ENCODE measurements at regions of chr1 and their contacts with region 1.

Region 1: GRCh38 chr1:244163861-244164562 is 112.9 kb downstream of the ZBTB18 start:
- DNase-seq: peak; percentile 99
- ATAC-seq: peak; percentile 92
- H3K4me3 ChIP-seq: peak overlapping the region; percentile 45
- H3K27ac ChIP-seq: peak overlapping the region; percentile 78
- H3K4me1 ChIP-seq: peaks cover 38% of the 10 kb centered on the region
- H3K27me3 ChIP-seq: no peaks in the 10 kb centered on the region
- CTCF ChIP-seq: no peak

Region 2: DNA sequence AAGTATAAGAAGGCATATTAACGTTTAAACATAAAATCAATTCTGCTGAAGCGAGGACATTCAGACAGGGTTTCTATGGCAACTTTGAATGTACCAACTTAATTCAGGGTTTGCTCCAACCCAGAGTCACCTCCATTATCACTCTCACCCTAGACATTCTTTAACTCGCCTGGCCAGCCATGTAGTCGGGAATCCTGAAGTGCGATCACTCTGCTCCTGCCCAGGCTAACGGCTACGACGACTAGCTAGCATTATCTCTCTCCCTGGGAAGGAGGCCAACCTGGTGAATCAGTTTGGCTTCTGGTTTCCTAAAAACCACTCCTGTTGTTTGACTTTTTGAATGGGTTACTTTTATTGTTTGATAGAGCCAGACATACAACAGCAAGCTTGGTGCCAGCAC is 151.8 kb before region 1 on chr1:
- CTCF ChIA-PET with region 1: no interaction called
- POLR2A ChIA-PET with region 1: no interaction called
- intact Hi-C with region 1: loop called (anchors 2 kb)
- DNase-seq: peak; percentile 97
- ATAC-seq: peak; percentile 89
- H3K4me3 ChIP-seq: peak overlapping the region; percentile 50
- H3K27ac ChIP-seq: no peak overlapping the region
- H3K4me1 ChIP-seq: peaks cover 7% of the 10 kb centered on the region
- H3K27me3 ChIP-seq: no peaks in the 10 kb centered on the region
- CTCF ChIP-seq: no peak

Region 3: GRCh38 chr1:244074559-244075171 is 89.3 kb before region 1 on chr1:
- CTCF ChIA-PET with region 1: no interaction called
- POLR2A ChIA-PET with region 1: no interaction called
- intact Hi-C with region 1: loop called (anchors 5 kb)
- DNase-seq: no peak
- ATAC-seq: peak; percentile 37
- H3K4me3 ChIP-seq: no peak overlapping the region
- H3K27ac ChIP-seq: no peak overlapping the region
- H3K4me1 ChIP-seq: peaks cover 9% of the 10 kb centered on the region; the same call in 1 of the 2 replicates
- H3K27me3 ChIP-seq: no peaks in the 10 kb centered on the region
- CTCF ChIP-seq: no peak

Region 4: GRCh38 chr1:244092293-244092963 is 71.6 kb before region 1 on chr1:
- CTCF ChIA-PET with region 1: no interaction called
- POLR2A ChIA-PET with region 1: no interaction called
- intact Hi-C with region 1: no loop called
- DNase-seq: peak; percentile 63
- ATAC-seq: peak; percentile 76
- H3K4me3 ChIP-seq: no peak overlapping the region
- H3K27ac ChIP-seq: no peak overlapping the region
- H3K4me1 ChIP-seq: peaks cover 10% of the 10 kb centered on the region; the same call in 1 of the 2 replicates
- H3K27me3 ChIP-seq: no peaks in the 10 kb centered on the region
- CTCF ChIP-seq: no peak

Region 5: GRCh38 chr1:244214009-244214967 is 50.3 kb after region 1 on chr1:
- CTCF ChIA-PET with region 1: no interaction called
- POLR2A ChIA-PET with region 1: no interaction called
- intact Hi-C with region 1: loop called (anchors 1 kb)
- DNase-seq: peak; percentile 90
- ATAC-seq: peak; percentile 50
- H3K4me3 ChIP-seq: no peak overlapping the region
- H3K27ac ChIP-seq: peak overlapping the region; percentile 45
- H3K4me1 ChIP-seq: peaks cover 25% of the 10 kb centered on the region
- H3K27me3 ChIP-seq: no peaks in the 10 kb centered on the region
- CTCF ChIP-seq: no peak

Region 6: GRCh38 chr1:244231572-244232315 is 67.7 kb after region 1 on chr1:
- CTCF ChIA-PET with region 1: no interaction called
- POLR2A ChIA-PET with region 1: no interaction called
- intact Hi-C with region 1: loop called (anchors 5 kb)
- DNase-seq: peak; percentile 79
- ATAC-seq: peak; percentile 76
- H3K4me3 ChIP-seq: peak overlapping the region; percentile 68
- H3K27ac ChIP-seq: peak overlapping the region; percentile 68
- H3K4me1 ChIP-seq: peaks cover 26% of the 10 kb centered on the region
- H3K27me3 ChIP-seq: no peaks in the 10 kb centered on the region
- CTCF ChIP-seq: no peak

Region 7: GRCh38 chr1:244265507-244265906 is 101.5 kb after region 1 on chr1:
- CTCF ChIA-PET with region 1: no interaction called
- POLR2A ChIA-PET with region 1: no interaction called
- intact Hi-C with region 1: no loop called
- DNase-seq: no peak
- ATAC-seq: no peak
- H3K4me3 ChIP-seq: no peak overlapping the region
- H3K27ac ChIP-seq: no peak overlapping the region
- H3K4me1 ChIP-seq: peaks cover 8% of the 10 kb centered on the region; the same call in 1 of the 2 replicates
- H3K27me3 ChIP-seq: no peaks in the 10 kb centered on the region
- CTCF ChIP-seq: no peak

Region 8: GRCh38 chr1:244445320-244446181 is 281.5 kb after region 1 on chr1:
- CTCF ChIA-PET with region 1: no interaction called
- POLR2A ChIA-PET with region 1: no interaction called
- intact Hi-C with region 1: no loop called
- DNase-seq: no peak
- ATAC-seq: no peak
- H3K4me3 ChIP-seq: no peak overlapping the region
- H3K27ac ChIP-seq: no peak overlapping the region
- H3K4me1 ChIP-seq: peaks cover 25% of the 10 kb centered on the region
- H3K27me3 ChIP-seq: no peaks in the 10 kb centered on the region
- CTCF ChIP-seq: no peak